ENCODE measurements at regions of chr17 and their contacts with region 1.

Region 1: DNA sequence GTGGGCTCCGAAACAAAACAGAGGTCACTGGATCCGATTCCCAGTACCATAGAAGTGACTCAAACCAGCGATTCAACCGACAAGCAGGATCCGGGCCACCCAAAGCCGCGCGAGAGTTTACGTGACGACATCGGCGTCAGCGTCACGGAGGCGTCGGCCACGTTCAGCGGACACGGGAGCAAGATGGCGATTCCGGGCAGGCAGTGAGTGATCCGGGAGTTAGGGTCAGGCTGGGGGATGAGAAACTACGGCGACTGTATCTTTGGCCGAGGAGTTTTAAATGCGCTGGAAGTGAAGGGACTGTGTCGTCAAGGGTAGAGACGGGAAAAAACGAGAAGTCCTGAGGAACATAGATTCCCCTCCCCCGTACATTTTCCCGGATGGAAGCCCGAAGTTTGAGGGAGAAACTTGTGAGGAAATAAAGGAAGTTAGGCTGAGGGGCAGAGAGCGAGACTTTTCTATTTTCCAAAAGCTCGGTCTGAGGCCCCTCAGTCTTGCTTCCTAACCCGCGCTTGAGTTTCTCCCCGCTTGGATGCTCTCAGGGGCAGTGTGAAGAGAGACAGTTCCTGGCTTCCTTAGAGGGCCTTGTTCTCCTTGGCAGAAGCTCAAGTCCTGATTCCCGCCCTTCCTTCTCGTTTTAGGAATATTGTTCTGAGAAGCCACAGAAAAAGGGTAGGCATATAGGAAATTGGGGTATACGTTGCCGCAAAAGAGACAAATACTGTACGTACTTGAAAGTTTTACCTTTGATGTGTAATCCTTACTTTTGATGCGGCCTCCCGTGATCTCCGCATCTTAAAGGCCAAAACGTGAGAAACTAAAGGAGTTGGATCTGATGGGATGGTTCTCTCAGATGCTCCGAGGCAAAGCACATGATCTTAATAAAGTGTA is at the start of gene NSRP1:
- DNase-seq: peak; percentile 90 to 93 (median 90)
- H3K4me3 ChIP-seq: peak within 1 kb of the TSS; percentile 95 to 100
- H3K4me3 Mint-ChIP-seq: peak within 1 kb of the TSS; percentile 95 to 100 (median 98)
- H3K27ac ChIP-seq: peak within 1 kb of the TSS; percentile 94
- H3K27ac Mint-ChIP-seq: peak within 1 kb of the TSS; percentile 94 to 100 (median 99)
- H3K4me1 ChIP-seq: peaks cover 36% of the 10 kb centered on the region
- H3K4me1 Mint-ChIP-seq: peaks cover 28 to 54% (median 39%) of the 10 kb centered on the region in 4 donors
- H3K27me3 ChIP-seq: no peaks in the 10 kb centered on the region
- H3K27me3 Mint-ChIP-seq: peaks cover under 1% of the 10 kb centered on the region in 2 donors
- total RNA-seq, gene NSRP1: 31.5 to 32.2 TPM

Region 2: GRCh38 chr17:30093463-30094147 is 23.3 kb before region 1 on chr17:
- CTCF ChIA-PET with region 1: interaction called, 12 read pairs
- POLR2A ChIA-PET with region 1: interaction called, 3 read pairs
- intact Hi-C with region 1: no loop called
- DNase-seq: peak; percentile 41 to 66 (median 52)
- H3K4me3 ChIP-seq: no peak overlapping the region
- H3K4me3 Mint-ChIP-seq: peak overlapping the region in 1 of 8 donors; percentile 24
- H3K27ac ChIP-seq: no peak overlapping the region
- H3K27ac Mint-ChIP-seq: no peak overlapping the region
- H3K4me1 ChIP-seq: peaks cover 6% of the 10 kb centered on the region
- H3K4me1 Mint-ChIP-seq: peaks cover 0 to 8% (median 3%) of the 10 kb centered on the region in 4 donors
- H3K27me3 ChIP-seq: no peaks in the 10 kb centered on the region
- H3K27me3 Mint-ChIP-seq: peaks cover 15 to 29% of the 10 kb centered on the region in 2 donors

Region 3: DNA sequence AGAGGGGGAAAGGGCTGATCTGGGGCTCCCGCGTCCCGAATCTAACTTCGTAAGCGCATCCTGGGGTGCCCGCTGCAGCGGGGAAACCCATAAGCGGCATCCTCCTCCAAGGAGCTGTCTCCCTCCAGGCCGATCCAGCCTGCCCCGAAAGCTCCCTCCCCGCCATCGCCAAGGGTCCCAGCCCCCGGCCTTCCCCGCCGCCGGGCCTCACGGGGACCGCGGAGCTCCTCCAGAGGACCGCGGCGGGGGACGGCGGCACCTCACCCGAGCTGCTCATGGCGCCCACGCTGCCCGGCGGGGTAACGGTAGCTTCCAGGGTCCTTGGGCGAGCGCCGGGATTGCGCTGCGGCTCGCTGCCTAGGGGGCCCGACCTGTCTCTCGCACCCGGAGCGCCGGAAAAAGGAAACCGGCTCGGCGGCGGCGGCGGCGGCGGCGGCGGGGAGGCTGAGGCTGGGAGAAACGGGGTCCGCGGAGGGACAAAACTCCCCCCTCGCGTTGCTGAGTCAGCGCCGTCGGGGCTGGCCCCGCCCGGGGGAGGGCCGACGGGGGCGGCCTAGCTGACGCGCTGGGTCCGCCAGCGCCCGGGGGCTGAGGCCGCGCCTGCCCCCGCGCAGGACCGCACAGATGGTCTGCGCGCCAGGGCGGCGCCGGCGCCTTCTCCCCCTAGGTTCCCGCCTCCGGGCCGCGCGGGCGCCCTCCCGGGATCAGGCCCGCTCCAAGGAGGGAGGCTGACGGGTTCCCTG is 174.8 kb after region 1 on chr17 and contains the start of gene BLMH:
- CTCF ChIA-PET with region 1: no interaction called
- POLR2A ChIA-PET with region 1: interaction called, 4 read pairs
- intact Hi-C with region 1: loop called (anchors 5 kb)
- DNase-seq: peak; percentile 68 to 82 (median 76)
- H3K4me3 ChIP-seq: peak within 1 kb of the TSS; percentile 77 to 80
- H3K4me3 Mint-ChIP-seq: peak within 1 kb of the TSS; percentile 89 to 97 (median 96)
- H3K27ac ChIP-seq: peak within 1 kb of the TSS; percentile 68
- H3K27ac Mint-ChIP-seq: peak within 1 kb of the TSS; percentile 87 to 94 (median 92)
- H3K4me1 ChIP-seq: peaks cover 24% of the 10 kb centered on the region
- H3K4me1 Mint-ChIP-seq: peaks cover 17 to 20% (median 18%) of the 10 kb centered on the region in 4 donors
- H3K27me3 ChIP-seq: no peaks in the 10 kb centered on the region
- H3K27me3 Mint-ChIP-seq: no peaks in the 10 kb centered on the region
- total RNA-seq, gene BLMH: 54.0 to 57.6 TPM

Region 4: GRCh38 chr17:30477083-30477773 is 360.3 kb after region 1 on chr17 and contains the start of gene GOSR1:
- CTCF ChIA-PET with region 1: interaction called, 5 read pairs
- POLR2A ChIA-PET with region 1: no interaction called
- intact Hi-C with region 1: loop called (anchors 5 kb)
- DNase-seq: peak; percentile 87 to 94 (median 90)
- H3K4me3 ChIP-seq: peak within 1 kb of the TSS; percentile 77 to 94
- H3K4me3 Mint-ChIP-seq: peak within 1 kb of the TSS; percentile 92 to 99 (median 97)
- H3K27ac ChIP-seq: peak within 1 kb of the TSS; percentile 99
- H3K27ac Mint-ChIP-seq: peak within 1 kb of the TSS; percentile 94 to 100 (median 98)
- H3K4me1 ChIP-seq: peaks cover 20% of the 10 kb centered on the region
- H3K4me1 Mint-ChIP-seq: peaks cover 20 to 45% (median 37%) of the 10 kb centered on the region in 4 donors
- H3K27me3 ChIP-seq: peaks cover 4% of the 10 kb centered on the region
- H3K27me3 Mint-ChIP-seq: peaks cover 0 to 2% of the 10 kb centered on the region in 2 donors
- total RNA-seq, gene GOSR1: 59.5 to 64.5 TPM